ENCODE measurements at regions of chr15 and their contacts with region 1.

Region 1: DNA sequence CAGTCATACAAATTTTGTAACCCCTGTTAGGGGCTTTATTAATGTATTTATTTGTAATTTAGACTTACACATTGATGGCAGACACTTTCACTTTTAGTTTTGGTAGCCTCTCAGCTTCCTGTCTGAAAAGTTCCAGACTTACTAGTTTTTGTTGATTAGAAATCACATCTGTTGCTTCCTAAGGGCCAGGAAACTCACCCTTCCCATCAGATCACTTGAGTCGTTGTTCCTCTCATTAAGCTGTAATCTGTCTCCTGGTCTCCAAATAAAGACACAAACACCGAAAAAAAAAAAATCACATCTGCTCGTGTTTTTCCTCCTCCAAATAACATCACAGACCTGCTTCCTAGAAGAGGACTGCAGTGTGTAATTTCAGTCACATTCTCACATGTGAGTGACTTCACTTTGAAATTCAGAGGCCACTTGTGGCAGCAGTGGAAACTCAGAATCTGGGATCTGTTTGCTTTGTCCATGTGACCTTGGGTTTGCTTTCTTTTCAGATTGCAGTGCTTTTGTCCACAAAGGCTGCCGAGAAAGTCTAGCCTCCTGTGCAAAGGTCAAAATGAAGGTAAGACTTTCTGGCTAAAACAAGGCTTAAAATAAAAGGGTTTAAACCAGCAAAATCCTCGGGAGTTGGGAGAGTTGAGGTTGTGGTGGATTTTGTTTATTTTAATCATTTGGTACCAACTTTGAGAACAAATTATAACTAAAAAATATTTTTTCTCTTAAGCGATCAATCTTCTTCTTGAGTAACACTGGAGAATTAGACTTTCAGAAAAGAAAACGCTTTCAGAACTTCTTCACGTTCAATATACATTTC is 87.0 kb downstream of the KLHL25 start:
- DNase-seq: peak in 1 of 5 donors; percentile 35
- ATAC-seq: peak; percentile 25 to 48 (median 28)
- H3K4me3 ChIP-seq: peak overlapping the region in 9 of 12 donors; percentile 10 to 46 (median 21)
- H3K27ac ChIP-seq: peak overlapping the region; percentile 70 to 97 (median 86)
- H3K4me1 ChIP-seq: peaks cover 3 to 87% (median 63%) of the 10 kb centered on the region in 12 donors
- H3K27me3 ChIP-seq: no peaks in the 10 kb centered on the region
- CTCF ChIP-seq: no peak
- POLR2A ChIP-seq: no peak

Region 2: GRCh38 chr15:85485956-85486567 is 221.7 kb before region 1 on chr15:
- intact Hi-C with region 1: loop called in 3 of 10 experiments (anchors 10 kb)
- DNase-seq: peak in 2 of 5 donors; percentile 49 to 62
- ATAC-seq: peak; percentile 47 to 79 (median 73)
- H3K4me3 ChIP-seq: no peak overlapping the region
- H3K27ac ChIP-seq: peak overlapping the region in 1 of 12 donors; percentile 41
- H3K4me1 ChIP-seq: peaks cover 0 to 80% (median 42%) of the 10 kb centered on the region in 12 donors
- H3K27me3 ChIP-seq: no peaks in the 10 kb centered on the region
- CTCF ChIP-seq: peak; percentile 58 to 92 (median 86)
- POLR2A ChIP-seq: no peak

Region 3: GRCh38 chr15:85494048-85494793 is 213.5 kb before region 1 on chr15:
- intact Hi-C with region 1: loop called in 3 of 10 experiments (anchors 10 kb)
- DNase-seq: no peak
- ATAC-seq: peak; percentile 55 to 86 (median 84)
- H3K4me3 ChIP-seq: no peak overlapping the region
- H3K27ac ChIP-seq: peak overlapping the region in 11 of 12 donors; percentile 8 to 76 (median 60)
- H3K4me1 ChIP-seq: peaks cover 12 to 93% (median 69%) of the 10 kb centered on the region in 12 donors
- H3K27me3 ChIP-seq: no peaks in the 10 kb centered on the region
- CTCF ChIP-seq: no peak
- POLR2A ChIP-seq: no peak

Region 4: GRCh38 chr15:85504749-85505676 is 202.7 kb before region 1 on chr15:
- intact Hi-C with region 1: loop called in 1 of 10 experiments (anchors 10 kb)
- DNase-seq: peak in 2 of 5 donors; percentile 39 to 62
- ATAC-seq: peak in 3 of 4 donors; percentile 50 to 66 (median 58)
- H3K4me3 ChIP-seq: no peak overlapping the region
- H3K27ac ChIP-seq: peak overlapping the region in 10 of 12 donors; percentile 29 to 83 (median 64)
- H3K4me1 ChIP-seq: peaks cover 2 to 91% (median 48%) of the 10 kb centered on the region in 12 donors
- H3K27me3 ChIP-seq: no peaks in the 10 kb centered on the region
- CTCF ChIP-seq: peak; percentile 29 to 79 (median 62)
- POLR2A ChIP-seq: no peak

Region 5: GRCh38 chr15:85618956-85619491 is 88.7 kb before region 1 on chr15:
- intact Hi-C with region 1: loop called in 6 of 10 experiments (anchors 2 to 10 kb)
- DNase-seq: peak; percentile 77 to 86 (median 81)
- ATAC-seq: peak; percentile 55 to 88 (median 77)
- H3K4me3 ChIP-seq: peak overlapping the region in 11 of 12 donors; percentile 14 to 69 (median 56)
- H3K27ac ChIP-seq: peak overlapping the region; percentile 68 to 91 (median 82)
- H3K4me1 ChIP-seq: peaks cover 21 to 100% (median 96%) of the 10 kb centered on the region in 12 donors
- H3K27me3 ChIP-seq: no peaks in the 10 kb centered on the region
- CTCF ChIP-seq: no peak
- POLR2A ChIP-seq: peak in 1 of 2 donors; percentile 56

Region 6: GRCh38 chr15:85625856-85626255 is 81.9 kb before region 1 on chr15:
- intact Hi-C with region 1: loop called in 3 of 10 experiments (anchors 2 to 10 kb)
- DNase-seq: no peak
- ATAC-seq: peak in 3 of 4 donors; percentile 12 to 46 (median 36)
- H3K4me3 ChIP-seq: no peak overlapping the region
- H3K27ac ChIP-seq: peak overlapping the region; percentile 31 to 91 (median 82)
- H3K4me1 ChIP-seq: peaks cover 16 to 98% (median 84%) of the 10 kb centered on the region in 12 donors
- H3K27me3 ChIP-seq: no peaks in the 10 kb centered on the region
- CTCF ChIP-seq: no peak
- POLR2A ChIP-seq: no peak

Region 7: GRCh38 chr15:86311568-86312280 is 604.0 kb after region 1 on chr15:
- intact Hi-C with region 1: no loop called
- DNase-seq: no peak
- ATAC-seq: no peak
- H3K4me3 ChIP-seq: no peak overlapping the region
- H3K27ac ChIP-seq: no peak overlapping the region
- H3K4me1 ChIP-seq: peaks cover 0 to 7% (median 0%) of the 10 kb centered on the region in 12 donors
- H3K27me3 ChIP-seq: peaks cover 0 to 6% (median 0%) of the 10 kb centered on the region in 9 donors
- CTCF ChIP-seq: no peak
- POLR2A ChIP-seq: no peak